ENCODE measurements at regions of chr2 and their contacts with region 1.

Region 1: GRCh38 chr2:85642725-85643124 is 25.3 kb downstream of the SFTPB start:
- DNase-seq: no peak
- ATAC-seq: no peak
- H3K4me3 ChIP-seq: no peak overlapping the region
- H3K27ac ChIP-seq: no peak overlapping the region
- H3K4me1 ChIP-seq: no peaks in the 10 kb centered on the region
- H3K27me3 ChIP-seq: no peaks in the 10 kb centered on the region
- CTCF ChIP-seq: no peak
- POLR2A ChIP-seq: no peak
- RAD21 ChIP-seq: no peak

Region 2: GRCh38 chr2:85621338-85621737 is 21.4 kb before region 1 on chr2:
- CTCF ChIA-PET with region 1: interaction called, 12 read pairs
- POLR2A ChIA-PET with region 1: no interaction called
- RAD21 ChIA-PET with region 1: no interaction called
- intact Hi-C with region 1: no loop called
- DNase-seq: no peak
- ATAC-seq: no peak
- H3K4me3 ChIP-seq: no peak overlapping the region
- H3K27ac ChIP-seq: no peak overlapping the region
- H3K4me1 ChIP-seq: peaks cover 8 to 11% of the 10 kb centered on the region in 2 experiments; a peak in 3 of 4 replicates
- H3K27me3 ChIP-seq: no peaks in the 10 kb centered on the region
- CTCF ChIP-seq: no peak
- POLR2A ChIP-seq: no peak
- RAD21 ChIP-seq: no peak

Region 3: DNA sequence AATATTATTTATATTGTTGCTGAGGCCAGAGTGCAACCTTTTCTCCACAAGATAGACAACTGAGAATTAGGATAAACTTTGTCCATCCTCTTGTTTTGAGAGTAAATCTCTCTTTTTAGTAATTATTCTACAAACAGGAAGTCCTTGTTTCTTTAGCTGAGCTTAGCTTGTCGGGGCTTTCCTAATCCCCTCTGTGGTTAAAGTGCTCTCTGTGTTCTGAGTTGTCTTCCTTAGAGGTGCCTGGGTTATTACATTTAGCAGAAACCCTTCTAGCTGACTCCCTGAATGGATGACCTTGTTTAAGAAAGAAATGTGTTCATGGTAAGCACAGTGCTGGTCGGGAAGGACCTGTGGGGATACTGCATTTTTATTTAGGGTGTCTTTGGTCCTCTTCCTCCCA is 14.1 kb before region 1 on chr2:
- CTCF ChIA-PET with region 1: interaction called, 12 read pairs
- POLR2A ChIA-PET with region 1: no interaction called
- RAD21 ChIA-PET with region 1: no interaction called
- intact Hi-C with region 1: no loop called
- DNase-seq: no peak
- ATAC-seq: no peak
- H3K4me3 ChIP-seq: no peak overlapping the region
- H3K27ac ChIP-seq: no peak overlapping the region
- H3K4me1 ChIP-seq: no peaks in the 10 kb centered on the region
- H3K27me3 ChIP-seq: no peaks in the 10 kb centered on the region
- CTCF ChIP-seq: no peak
- POLR2A ChIP-seq: no peak
- RAD21 ChIP-seq: no peak

Region 4: GRCh38 chr2:85707304-85707703 is 64.6 kb after region 1 on chr2:
- CTCF ChIA-PET with region 1: interaction called, 29 read pairs
- POLR2A ChIA-PET with region 1: interaction called, 3 read pairs
- RAD21 ChIA-PET with region 1: interaction called in 1 of 2 experiments, 4 read pairs
- intact Hi-C with region 1: loop called (anchors 1 kb)
- DNase-seq: peak; percentile 89
- ATAC-seq: peak; percentile 93
- H3K4me3 ChIP-seq: no peak overlapping the region; a peak in 1 of 4 replicates
- H3K27ac ChIP-seq: no peak overlapping the region
- H3K4me1 ChIP-seq: peaks cover 8 to 26% of the 10 kb centered on the region in 2 experiments
- H3K27me3 ChIP-seq: no peaks in the 10 kb centered on the region
- CTCF ChIP-seq: peak; percentile 81 to 95 (median 92)
- POLR2A ChIP-seq: no peak
- RAD21 ChIP-seq: peak; percentile 83

Region 5: DNA sequence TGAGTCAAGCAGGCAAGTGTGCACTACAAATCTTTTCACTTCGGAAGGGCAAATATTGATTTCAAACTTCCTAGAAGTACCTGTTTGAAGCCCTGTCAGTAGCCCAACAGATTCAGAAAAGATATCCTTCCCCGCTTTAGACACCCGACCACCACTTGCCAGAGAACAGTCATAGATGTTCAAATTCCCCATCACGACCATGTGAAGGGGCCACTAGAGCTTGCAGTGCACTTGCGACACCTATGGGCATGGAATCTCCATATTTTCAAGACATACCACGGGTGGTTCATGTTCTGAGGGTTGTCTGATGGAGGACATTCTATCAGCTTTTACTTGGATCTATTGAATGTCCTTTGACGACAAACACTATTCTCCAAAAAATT is 75.3 kb after region 1 on chr2:
- CTCF ChIA-PET with region 1: interaction called, 24 read pairs
- POLR2A ChIA-PET with region 1: no interaction called
- RAD21 ChIA-PET with region 1: no interaction called
- intact Hi-C with region 1: no loop called
- DNase-seq: no peak
- ATAC-seq: no peak
- H3K4me3 ChIP-seq: no peak overlapping the region
- H3K27ac ChIP-seq: no peak overlapping the region
- H3K4me1 ChIP-seq: no peaks in the 10 kb centered on the region
- H3K27me3 ChIP-seq: no peaks in the 10 kb centered on the region
- CTCF ChIP-seq: peak in 2 of 3 experiments; percentile 5 to 21; a peak in 1 of 6 replicates
- POLR2A ChIP-seq: no peak
- RAD21 ChIP-seq: peak; percentile 36; the same call in 1 of the 2 replicates

Region 6: GRCh38 chr2:85813982-85814801 is 171.5 kb after region 1 on chr2:
- CTCF ChIA-PET with region 1: interaction called, 17 read pairs
- POLR2A ChIA-PET with region 1: no interaction called
- RAD21 ChIA-PET with region 1: interaction called, 7 read pairs
- intact Hi-C with region 1: loop called (anchors 1 kb)
- DNase-seq: peak; percentile 76
- ATAC-seq: peak; percentile 99
- H3K4me3 ChIP-seq: no peak overlapping the region
- H3K27ac ChIP-seq: no peak overlapping the region
- H3K4me1 ChIP-seq: no peaks in the 10 kb centered on the region
- H3K27me3 ChIP-seq: no peaks in the 10 kb centered on the region
- CTCF ChIP-seq: peak; percentile 93 to 98 (median 96)
- POLR2A ChIP-seq: no peak
- RAD21 ChIP-seq: peak; percentile 99

Measured in HCT116 (cell line).